Ovary (tissue), 10 donors: ENCODE measurements at regions of chr5 and their contacts with region 1.

Region 1: GRCh38 chr5:172697123-172698121 is 56.4 kb downstream of the NEURL1B start:
- DNase-seq: peak; percentile 88 to 94 (median 91)
- H3K4me3 ChIP-seq: peak overlapping the region; percentile 48
- H3K27ac ChIP-seq: peak overlapping the region; percentile 5 to 61
- H3K4me1 ChIP-seq: peaks cover 28% of the 10 kb centered on the region
- H3K27me3 ChIP-seq: no peaks in the 10 kb centered on the region
- CTCF ChIP-seq: peak; percentile 83 to 94 (median 94)
- EP300 ChIP-seq: no peak
- POLR2A ChIP-seq: peak; percentile 40

Region 2: DNA sequence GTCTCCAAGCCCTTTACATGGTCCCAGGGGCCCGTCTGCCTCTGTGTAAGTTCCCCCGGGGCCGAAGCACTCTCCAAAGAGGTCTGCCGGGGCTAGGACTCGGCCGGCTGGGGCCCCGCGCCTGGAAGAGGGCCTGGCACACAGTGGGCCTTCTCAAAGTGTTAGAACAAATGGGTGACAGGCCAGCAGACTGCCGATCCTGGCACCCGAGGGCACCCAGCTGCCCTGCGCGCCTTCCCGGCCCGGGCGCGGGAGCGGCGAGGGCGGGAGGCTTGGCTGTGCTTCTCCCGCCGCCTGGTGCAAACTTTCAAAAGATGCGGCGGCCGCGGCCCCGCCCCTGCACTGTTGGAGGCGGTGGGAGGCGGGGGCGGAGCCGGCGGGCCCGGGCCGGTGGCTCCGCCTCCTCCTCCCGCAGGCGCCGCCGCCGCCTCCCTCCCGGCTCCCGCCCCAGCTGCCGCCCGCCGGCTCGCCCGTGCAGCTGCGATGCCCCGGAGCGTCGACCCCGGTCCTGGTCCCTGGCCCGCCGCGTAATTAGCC is 56.5 kb before region 1 on chr5 and contains the start of gene NEURL1B:
- intact Hi-C with region 1: loop called (anchors 2 to 10 kb)
- DNase-seq: peak; percentile 82 to 89 (median 87)
- H3K4me3 ChIP-seq: peak within 1 kb of the TSS; percentile 73
- H3K27ac ChIP-seq: peak within 1 kb of the TSS; percentile 38 to 89
- H3K4me1 ChIP-seq: peaks cover 4% of the 10 kb centered on the region
- H3K27me3 ChIP-seq: no peaks in the 10 kb centered on the region
- CTCF ChIP-seq: peak in 1 of 3 donors; percentile 19
- EP300 ChIP-seq: no peak
- POLR2A ChIP-seq: peak; percentile 44
- total RNA-seq, gene NEURL1B: 15.0 to 75.1 (median 36.3) TPM

Region 3: DNA sequence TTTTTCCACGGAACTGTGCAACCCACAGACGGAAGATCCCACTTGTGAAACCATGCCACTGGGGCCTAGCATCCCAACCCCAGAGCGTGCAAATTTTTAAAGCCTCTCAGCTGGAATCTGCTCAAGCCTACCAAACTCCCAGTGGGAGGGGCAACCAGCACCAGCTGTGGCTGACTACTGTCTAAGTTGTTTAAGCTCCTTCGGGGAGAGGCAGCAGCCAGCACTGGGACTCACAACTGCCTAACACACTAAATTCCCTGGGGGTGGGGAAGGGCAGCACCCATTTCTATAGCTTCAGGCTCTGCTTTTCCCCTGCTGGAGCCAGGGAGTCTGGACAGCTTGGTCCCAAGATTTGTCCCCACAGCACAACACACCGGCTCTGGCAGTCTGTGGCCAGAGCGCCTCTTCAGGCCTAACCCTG is 1739.4 kb after region 1 on chr5:
- intact Hi-C with region 1: no loop called
- DNase-seq: no peak
- H3K4me3 ChIP-seq: no peak overlapping the region
- H3K27ac ChIP-seq: no peak overlapping the region
- H3K4me1 ChIP-seq: no peaks in the 10 kb centered on the region
- H3K27me3 ChIP-seq: no peaks in the 10 kb centered on the region
- CTCF ChIP-seq: no peak
- EP300 ChIP-seq: no peak
- POLR2A ChIP-seq: no peak